K562 (cell line): ENCODE measurements at regions of chr16 and their contacts with region 1.

Region 1: DNA sequence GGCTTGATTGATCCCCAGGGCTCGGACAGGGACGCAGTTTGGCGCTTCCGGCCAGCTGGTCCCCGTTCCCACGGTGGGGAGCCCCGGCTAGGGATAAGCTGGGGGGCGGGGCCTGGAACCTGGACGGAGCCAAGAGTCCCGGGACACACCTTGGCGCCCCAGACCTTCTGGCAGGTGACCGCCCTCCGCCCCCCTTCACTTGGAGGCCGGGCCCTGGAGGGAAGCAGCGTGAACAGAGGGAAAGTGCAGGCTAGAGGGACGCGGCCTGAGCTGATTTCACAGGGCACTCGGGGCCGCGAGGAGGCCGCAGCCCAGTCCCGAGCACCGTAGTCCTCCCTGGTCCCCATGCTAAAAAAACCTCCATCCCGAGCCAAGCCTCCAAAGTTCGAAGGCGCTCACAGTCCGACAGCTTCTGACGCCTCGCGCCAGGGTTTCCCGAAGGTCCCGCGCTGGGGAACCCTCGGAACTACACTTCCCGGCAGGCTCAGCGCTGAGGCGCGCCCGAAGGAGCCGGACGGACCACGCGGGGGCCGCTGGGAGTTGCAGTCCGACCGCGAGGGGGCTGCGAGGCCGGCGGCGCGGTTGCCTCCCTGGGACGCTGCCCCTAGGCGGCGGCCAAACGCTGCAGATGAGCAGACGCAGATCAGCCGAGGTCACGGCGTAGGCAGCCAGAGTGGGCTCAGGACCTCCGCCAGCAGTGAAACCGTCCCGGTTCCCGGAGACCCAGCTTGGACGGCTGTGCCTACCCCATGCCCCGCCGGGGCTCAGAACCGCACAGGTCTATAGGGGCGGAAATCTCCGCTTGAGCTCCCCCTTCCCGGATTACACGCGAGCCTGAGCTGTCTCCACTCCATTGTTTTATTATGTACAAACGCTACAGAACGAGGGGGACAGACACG is at the start of gene TBX6:
- DNase-seq: peak; percentile 85 to 96 (median 89)
- ATAC-seq: peak; percentile 89
- H3K4me3 ChIP-seq: peak within 1 kb of the TSS; percentile 49
- H3K27ac ChIP-seq: peak within 1 kb of the TSS; percentile 85
- H3K4me1 ChIP-seq: peaks cover 34 to 72% of the 10 kb centered on the region in 2 experiments
- H3K27me3 ChIP-seq: no peaks in the 10 kb centered on the region
- CTCF ChIP-seq: peak; percentile 74 to 92 (median 88)
- EP300 ChIP-seq: 0 out of 2 replicates have a peak, but pooled peaks have one; percentile 41
- POLR2A ChIP-seq: peak; percentile 80
- RAD21 ChIP-seq: peak; percentile 71 to 77
- polyA plus RNA-seq, gene TBX6: not detected

Region 2: GRCh38 chr16:29645694-29646187 is 446.0 kb before region 1 on chr16:
- CTCF ChIA-PET with region 1: no interaction called
- POLR2A ChIA-PET with region 1: no interaction called
- in situ Hi-C with region 1: no loop called
- intact Hi-C with region 1: no loop called
- DNase-seq: peak; percentile 79 to 87 (median 87)
- ATAC-seq: peak; percentile 94
- H3K4me3 ChIP-seq: no peak overlapping the region
- H3K27ac ChIP-seq: peak overlapping the region; percentile 66
- H3K4me1 ChIP-seq: peaks cover 29 to 35% of the 10 kb centered on the region in 2 experiments
- H3K27me3 ChIP-seq: no peaks in the 10 kb centered on the region
- CTCF ChIP-seq: no peak
- EP300 ChIP-seq: no peak
- POLR2A ChIP-seq: no peak
- RAD21 ChIP-seq: no peak

Region 3: DNA sequence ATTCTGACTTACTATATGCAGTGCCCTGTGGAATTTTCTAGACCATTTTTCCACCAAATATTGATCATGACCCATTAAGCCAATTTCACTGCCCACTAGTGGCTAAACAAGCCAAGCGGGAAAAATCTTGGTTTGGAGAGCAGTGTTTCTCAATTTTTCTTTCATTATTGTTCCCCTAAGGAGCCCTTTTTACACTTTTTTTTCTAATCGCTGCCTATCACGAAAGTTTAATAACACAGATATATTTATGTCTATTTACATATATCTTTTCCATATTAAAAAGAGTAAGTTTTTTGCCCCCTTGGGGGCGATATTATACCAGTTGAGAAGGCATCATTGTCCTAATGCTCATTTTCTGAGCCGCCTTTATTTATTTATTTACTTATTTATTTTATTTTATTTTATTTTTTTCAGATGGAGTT is 49.9 kb before region 1 on chr16:
- CTCF ChIA-PET with region 1: interaction called, 12 read pairs
- POLR2A ChIA-PET with region 1: no interaction called
- in situ Hi-C with region 1: no loop called
- intact Hi-C with region 1: loop called (anchors 5 kb)
- DNase-seq: peak in 1 of 4 experiments; percentile 44
- ATAC-seq: no peak
- H3K4me3 ChIP-seq: no peak overlapping the region
- H3K27ac ChIP-seq: no peak overlapping the region
- H3K4me1 ChIP-seq: peaks cover 0 to 5% of the 10 kb centered on the region in 2 experiments; a peak in 3 of 5 replicates
- H3K27me3 ChIP-seq: peaks cover 0 to 8% of the 10 kb centered on the region in 2 experiments; a peak in 2 of 5 replicates
- CTCF ChIP-seq: peak in 2 of 3 experiments; percentile 51 to 76; a peak in 5 of 6 replicates
- EP300 ChIP-seq: no peak
- POLR2A ChIP-seq: no peak
- RAD21 ChIP-seq: peak; percentile 57 to 58

Region 4: GRCh38 chr16:30052671-30053372 is 38.9 kb before region 1 on chr16:
- CTCF ChIA-PET with region 1: interaction called, 3 read pairs
- POLR2A ChIA-PET with region 1: interaction called, 3 read pairs
- in situ Hi-C with region 1: no loop called
- intact Hi-C with region 1: loop called (anchors 5 kb)
- DNase-seq: peak; percentile 95 to 97 (median 96)
- ATAC-seq: peak; percentile 84
- H3K4me3 ChIP-seq: peak overlapping the region; percentile 56
- H3K27ac ChIP-seq: peak overlapping the region; percentile 87
- H3K4me1 ChIP-seq: peaks cover 19 to 32% of the 10 kb centered on the region in 2 experiments
- H3K27me3 ChIP-seq: no peaks in the 10 kb centered on the region
- CTCF ChIP-seq: no peak
- EP300 ChIP-seq: peak; percentile 80
- POLR2A ChIP-seq: peak; percentile 57
- RAD21 ChIP-seq: no peak

Region 5: DNA sequence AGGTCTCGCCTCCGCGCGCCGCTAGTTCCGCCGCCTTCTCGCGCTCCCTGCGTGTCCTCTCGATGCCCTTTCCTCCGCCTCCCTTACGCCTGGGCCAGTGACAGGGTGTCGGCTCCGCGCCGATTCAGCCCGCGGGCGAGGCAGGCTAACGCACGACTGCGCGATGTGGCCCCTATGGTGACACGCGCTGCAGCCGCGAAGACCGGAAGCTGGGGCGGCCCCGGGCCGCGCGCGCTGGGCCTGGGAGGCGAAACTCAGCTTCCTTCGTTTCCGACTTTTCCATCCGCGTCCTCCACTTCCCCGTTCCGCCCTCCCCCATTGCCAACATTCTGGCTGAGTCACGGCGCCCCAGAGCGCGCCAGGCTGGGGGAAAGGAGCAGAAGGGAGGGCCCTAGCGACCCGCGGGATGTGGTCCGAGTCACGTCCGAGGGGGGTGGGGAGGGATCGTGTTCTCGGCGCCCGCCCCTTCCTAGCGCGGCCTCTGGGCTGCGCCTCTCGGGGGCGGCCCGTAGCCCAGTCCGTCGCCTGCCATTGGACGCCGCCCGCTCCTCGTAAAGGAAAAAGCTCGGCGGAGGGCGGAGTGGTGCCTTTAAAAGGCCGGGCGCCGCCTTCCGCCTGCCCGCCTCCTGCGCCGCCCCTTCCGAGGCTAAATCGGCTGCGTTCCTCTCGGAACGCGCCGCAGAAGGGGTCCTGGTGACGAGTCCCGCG is 26.4 kb before region 1 on chr16 and contains the start of gene ALDOA:
- CTCF ChIA-PET with region 1: no interaction called
- POLR2A ChIA-PET with region 1: interaction called, 19 read pairs
- in situ Hi-C with region 1: no loop called
- intact Hi-C with region 1: no loop called
- DNase-seq: peak; percentile 88 to 99 (median 92)
- ATAC-seq: peak; percentile 92
- H3K4me3 ChIP-seq: peak within 1 kb of the TSS; percentile 88
- H3K27ac ChIP-seq: peak within 1 kb of the TSS; percentile 99
- H3K4me1 ChIP-seq: peaks cover 46 to 65% of the 10 kb centered on the region in 2 experiments
- H3K27me3 ChIP-seq: no peaks in the 10 kb centered on the region
- CTCF ChIP-seq: no peak
- EP300 ChIP-seq: peak; percentile 53; the same call in 1 of the 2 replicates
- POLR2A ChIP-seq: peak; percentile 99
- RAD21 ChIP-seq: no peak
- polyA plus RNA-seq, gene ALDOA: 311 to 650 TPM

Region 6: DNA sequence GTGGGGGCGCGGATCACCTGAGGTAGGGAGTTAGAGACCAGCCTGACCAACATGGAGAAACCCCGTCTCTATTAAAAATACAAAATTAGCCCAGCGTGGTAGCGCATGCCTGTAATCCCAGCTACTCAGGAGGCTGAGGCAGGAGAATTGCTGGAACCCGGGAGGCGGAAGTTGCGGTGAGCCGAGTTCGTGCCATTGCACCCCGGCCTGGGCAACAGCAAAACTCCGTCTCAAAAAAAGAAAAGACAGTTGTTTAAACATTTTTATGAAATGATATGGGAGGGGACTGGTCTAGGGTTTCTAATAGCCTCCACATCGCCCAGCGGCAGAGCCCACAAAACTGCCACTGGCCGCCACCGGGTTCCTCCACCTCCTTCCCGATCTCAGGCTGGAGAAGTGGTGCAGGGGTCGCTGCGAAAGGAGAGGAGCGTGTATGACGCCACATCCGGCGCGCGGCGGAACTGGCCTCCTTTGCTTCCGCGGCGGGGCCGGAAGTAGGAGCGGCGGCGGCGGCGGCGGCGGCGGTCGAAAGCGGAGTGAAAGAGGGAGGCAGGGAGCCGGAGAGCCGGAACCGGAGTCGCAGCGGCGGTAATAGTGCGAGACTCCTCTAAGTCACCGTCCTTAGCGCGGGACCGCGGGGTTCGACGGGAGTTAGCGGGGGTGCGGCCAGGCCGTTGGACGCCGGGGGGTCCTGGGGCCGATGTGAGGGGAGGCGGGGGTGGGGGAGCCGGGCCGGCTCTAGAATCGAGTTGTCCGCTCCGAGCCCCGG is 16.0 kb before region 1 on chr16 and contains the start of gene PPP4C:
- CTCF ChIA-PET with region 1: no interaction called
- POLR2A ChIA-PET with region 1: interaction called, 59 read pairs
- in situ Hi-C with region 1: no loop called
- intact Hi-C with region 1: no loop called
- DNase-seq: peak; percentile 82 to 95 (median 89)
- ATAC-seq: peak; percentile 90
- H3K4me3 ChIP-seq: peak within 1 kb of the TSS; percentile 94
- H3K27ac ChIP-seq: peak within 1 kb of the TSS; percentile 97
- H3K4me1 ChIP-seq: peaks cover 16 to 24% of the 10 kb centered on the region in 2 experiments
- H3K27me3 ChIP-seq: no peaks in the 10 kb centered on the region
- CTCF ChIP-seq: 0 out of 6 replicates have a peak, but pooled peaks of 1 of the 3 experiments have one; percentile 8
- EP300 ChIP-seq: peak; percentile 12; the same call in 1 of the 2 replicates
- POLR2A ChIP-seq: peak; percentile 98
- RAD21 ChIP-seq: no peak
- polyA plus RNA-seq, gene PPP4C: 3.5 to 10.7 TPM

Region 7: DNA sequence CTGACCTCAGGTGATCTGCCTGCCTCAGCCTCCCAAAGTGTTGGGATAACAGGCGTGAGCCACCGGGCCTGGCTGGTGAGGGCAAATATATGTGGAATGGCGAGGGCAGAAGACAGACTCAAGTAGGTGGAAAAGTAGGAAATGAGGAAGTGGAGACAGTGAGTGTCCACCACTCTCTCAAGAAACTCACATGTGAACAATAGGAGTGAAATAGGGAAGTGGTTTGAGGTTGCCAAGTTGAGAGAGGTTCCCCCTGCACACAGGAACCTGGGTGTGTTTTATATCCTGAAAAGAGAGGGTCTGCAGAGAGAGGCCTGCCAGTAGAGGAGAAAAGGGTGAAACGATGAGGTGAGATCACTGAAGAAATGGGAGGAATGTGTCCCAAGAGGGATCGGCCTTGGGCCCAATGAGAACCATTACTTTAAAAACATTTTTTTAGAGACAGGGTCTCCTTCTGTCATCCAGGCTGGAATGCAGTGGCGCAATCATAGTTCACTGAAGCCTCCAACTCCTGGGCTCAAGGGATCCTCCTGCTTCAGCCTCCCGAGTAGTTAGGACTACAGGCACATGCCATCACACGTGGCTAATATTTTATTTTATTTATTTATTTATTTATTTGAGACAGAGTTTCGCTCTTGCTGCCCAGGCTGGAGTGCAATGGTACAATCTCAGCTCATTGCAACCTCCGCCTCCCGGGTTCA is 74.6 kb after region 1 on chr16:
- CTCF ChIA-PET with region 1: no interaction called
- POLR2A ChIA-PET with region 1: no interaction called
- in situ Hi-C with region 1: no loop called
- intact Hi-C with region 1: no loop called
- DNase-seq: no peak
- ATAC-seq: no peak
- H3K4me3 ChIP-seq: no peak overlapping the region
- H3K27ac ChIP-seq: no peak overlapping the region
- H3K4me1 ChIP-seq: no peaks in the 10 kb centered on the region; a peak in 2 of 5 replicates
- H3K27me3 ChIP-seq: no peaks in the 10 kb centered on the region
- CTCF ChIP-seq: no peak
- EP300 ChIP-seq: no peak
- POLR2A ChIP-seq: no peak
- RAD21 ChIP-seq: no peak

Region 8: DNA sequence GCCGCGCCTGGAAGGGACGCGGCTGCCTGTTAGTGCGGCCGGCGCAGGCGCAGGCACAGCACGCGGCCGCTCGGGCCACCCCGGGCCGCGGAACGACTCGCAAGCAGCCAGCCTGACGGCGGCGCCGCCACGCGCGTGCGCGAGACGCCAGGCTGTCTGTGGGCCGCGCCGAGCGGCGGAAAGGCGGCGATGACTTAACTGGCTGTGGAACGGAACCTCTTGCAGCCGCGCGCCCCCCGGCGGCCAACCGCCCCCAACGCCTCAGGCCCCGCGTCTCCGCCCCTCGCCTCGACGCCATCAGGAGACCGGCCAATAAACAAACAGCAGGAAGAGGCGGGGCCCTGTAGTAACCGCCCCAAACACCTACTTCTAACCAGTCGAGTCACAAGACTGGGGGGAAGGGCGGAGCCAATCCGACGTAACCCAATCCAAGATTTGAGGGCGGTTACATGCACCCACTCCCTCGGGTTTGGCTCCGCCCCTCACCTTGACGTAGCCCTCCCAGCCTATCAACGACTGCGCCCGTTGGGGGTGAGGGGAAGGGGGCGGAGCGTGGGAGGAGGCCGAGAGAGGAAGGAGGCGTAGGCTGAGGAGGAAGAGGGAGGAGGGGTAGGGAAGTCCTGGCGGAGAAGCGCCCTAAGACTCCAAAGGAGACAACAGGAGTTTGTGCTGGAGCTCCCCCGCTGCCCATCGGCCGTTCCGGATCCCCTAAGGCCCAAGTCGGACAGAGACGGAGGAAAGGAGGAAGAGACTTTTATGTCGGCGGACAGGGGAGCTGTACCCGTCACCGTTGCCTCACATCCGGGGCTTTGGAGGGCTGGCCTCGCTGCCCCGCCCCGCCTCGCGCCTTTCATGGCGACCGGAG is 566.4 kb after region 1 on chr16 and contains the start of gene FBRS:
- CTCF ChIA-PET with region 1: no interaction called
- POLR2A ChIA-PET with region 1: interaction called, 3 read pairs
- in situ Hi-C with region 1: no loop called
- intact Hi-C with region 1: loop called (anchors 10 kb)
- DNase-seq: peak; percentile 93 to 100 (median 96)
- ATAC-seq: peak; percentile 88
- H3K4me3 ChIP-seq: peak within 1 kb of the TSS; percentile 90
- H3K27ac ChIP-seq: peak within 1 kb of the TSS; percentile 99
- H3K4me1 ChIP-seq: peaks cover 20 to 52% of the 10 kb centered on the region in 2 experiments; a peak in 4 of 5 replicates
- H3K27me3 ChIP-seq: no peaks in the 10 kb centered on the region
- CTCF ChIP-seq: peak; percentile 90 to 97 (median 90)
- EP300 ChIP-seq: no peak
- POLR2A ChIP-seq: peak; percentile 95
- RAD21 ChIP-seq: peak; percentile 78 to 82
- polyA plus RNA-seq, gene FBRS: 0.32 to 0.46 TPM